ENCODE measurements at regions of chr2 and their contacts with region 1.

Region 1: DNA sequence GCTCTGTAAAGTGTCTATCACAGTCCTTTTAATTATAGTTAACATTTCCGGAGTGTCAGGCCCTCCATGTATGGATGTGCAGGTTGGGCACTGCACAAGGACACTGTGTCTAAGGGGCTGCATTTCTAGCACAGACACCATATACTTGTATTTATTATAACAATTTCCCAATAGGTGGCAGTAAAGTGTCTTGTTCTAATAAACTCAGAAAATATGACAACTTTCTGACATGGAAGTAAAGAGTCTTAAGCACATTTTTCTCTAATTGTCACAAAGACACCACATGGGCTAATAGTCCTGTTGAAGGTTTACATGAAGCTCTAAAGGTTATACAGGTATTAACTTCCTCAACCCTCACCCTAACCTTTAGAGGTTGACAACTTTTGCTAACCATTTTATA is 156.6 kb downstream of the DYSF start:
- DNase-seq: no peak
- ATAC-seq: peak in 2 of 8 donors; percentile 27 to 36
- H3K4me3 ChIP-seq: no peak overlapping the region
- H3K27ac ChIP-seq: peak overlapping the region in 1 of 10 donors; percentile 0
- H3K4me1 ChIP-seq: peaks cover 14 to 46% (median 32%) of the 10 kb centered on the region in 9 donors
- H3K27me3 ChIP-seq: no peaks in the 10 kb centered on the region
- CTCF ChIP-seq: peak in 7 of 9 donors; percentile 30 to 59 (median 48)

Region 2: DNA sequence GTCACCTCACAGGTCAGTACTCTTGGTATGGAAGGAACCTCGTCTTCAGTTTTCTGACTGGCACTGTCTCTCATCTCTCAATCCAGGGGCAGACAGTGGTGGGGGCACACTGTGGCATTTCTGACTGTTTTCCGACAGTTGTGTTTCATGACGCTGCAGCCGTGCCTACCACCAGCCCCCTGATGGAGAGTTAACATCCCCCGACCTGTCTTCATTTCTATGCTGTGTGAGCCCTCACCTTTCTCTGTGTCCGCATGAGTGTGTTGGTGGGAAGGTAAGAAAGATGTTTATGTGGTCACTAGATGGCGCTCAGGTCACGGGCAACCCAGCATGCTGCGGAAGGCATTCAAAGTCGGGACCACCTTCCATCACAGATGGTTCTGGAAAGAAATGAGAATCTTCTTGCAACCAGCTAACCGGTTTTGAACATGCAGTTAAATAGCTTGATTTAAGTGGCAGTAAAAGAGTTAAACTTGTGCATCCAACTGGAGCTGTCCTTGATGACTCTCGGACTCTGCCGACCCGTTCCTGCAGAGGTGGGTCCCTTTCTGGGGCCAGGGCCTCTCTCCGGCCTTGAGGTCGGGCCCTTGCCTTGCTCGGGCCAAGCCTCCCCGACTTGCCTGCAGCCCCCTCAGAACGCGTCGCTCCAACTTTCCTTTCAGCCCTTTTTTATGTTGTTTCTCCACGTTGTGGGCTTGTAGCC is 64.2 kb before region 1 on chr2:
- intact Hi-C with region 1: loop called in 3 of 10 experiments (anchors 5 kb)
- DNase-seq: peak in 1 of 2 donors; percentile 55
- ATAC-seq: peak; percentile 59 to 83 (median 78)
- H3K4me3 ChIP-seq: peak overlapping the region in 6 of 10 donors; percentile 15 to 30 (median 24)
- H3K27ac ChIP-seq: peak overlapping the region in 9 of 10 donors; percentile 34 to 79 (median 71)
- H3K4me1 ChIP-seq: peaks cover 0 to 17% (median 13%) of the 10 kb centered on the region in 9 donors
- H3K27me3 ChIP-seq: no peaks in the 10 kb centered on the region
- CTCF ChIP-seq: peak; percentile 66 to 83 (median 75)

Region 3: DNA sequence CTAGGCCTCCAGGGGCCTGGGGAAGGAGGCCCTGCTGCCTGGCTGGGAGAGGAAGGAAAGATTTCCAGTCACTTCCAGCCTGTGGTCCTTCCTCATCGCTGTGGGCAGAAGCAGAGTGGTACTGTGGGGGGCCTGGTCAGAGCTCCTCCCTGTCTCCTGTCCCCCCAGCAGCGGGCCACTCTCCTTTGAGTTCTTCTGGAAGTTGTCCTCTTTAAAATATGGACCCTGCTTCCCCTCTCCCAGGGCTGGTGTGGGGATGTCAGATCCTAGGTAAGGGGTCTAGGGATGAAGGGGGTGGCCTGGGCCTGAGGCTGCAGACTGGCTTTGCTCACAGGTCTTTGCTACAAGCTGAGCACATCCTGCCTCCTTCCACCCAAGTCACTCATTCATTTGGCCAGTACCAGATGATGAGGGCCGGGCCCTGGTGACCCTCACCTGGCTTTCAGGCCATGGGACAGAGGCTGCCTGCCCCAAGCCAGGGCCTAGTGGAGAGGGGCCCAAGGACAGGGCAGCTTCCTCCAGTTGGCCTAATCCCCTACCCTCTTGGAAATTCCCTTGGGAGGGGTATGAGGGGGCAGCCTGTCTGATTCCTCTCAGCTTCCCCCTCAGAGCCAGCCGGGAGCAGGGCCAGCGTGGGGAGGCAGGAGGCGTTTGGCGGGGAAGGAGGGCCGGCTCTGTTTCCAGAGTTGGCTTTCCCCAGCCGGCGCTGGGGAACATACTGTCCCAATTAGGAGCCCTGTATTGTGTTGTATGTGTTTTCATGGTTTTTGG is 75.3 kb after region 1 on chr2:
- intact Hi-C with region 1: loop called in 1 of 10 experiments (anchors 10 kb)
- DNase-seq: no peak
- ATAC-seq: peak; percentile 34 to 90 (median 50)
- H3K4me3 ChIP-seq: no peak overlapping the region
- H3K27ac ChIP-seq: peak overlapping the region in 7 of 10 donors; percentile 4 to 62 (median 30)
- H3K4me1 ChIP-seq: peaks cover 0 to 37% (median 10%) of the 10 kb centered on the region in 9 donors
- H3K27me3 ChIP-seq: no peaks in the 10 kb centered on the region
- CTCF ChIP-seq: no peak

Region 4: GRCh38 chr2:71861186-71862160 is 251.5 kb after region 1 on chr2:
- intact Hi-C with region 1: loop called in 1 of 10 experiments (anchors 10 kb)
- DNase-seq: no peak
- ATAC-seq: no peak
- H3K4me3 ChIP-seq: no peak overlapping the region
- H3K27ac ChIP-seq: no peak overlapping the region
- H3K4me1 ChIP-seq: no peaks in the 10 kb centered on the region
- H3K27me3 ChIP-seq: peaks cover 0 to under 1% (median 0%) of the 10 kb centered on the region in 7 donors
- CTCF ChIP-seq: no peak

Region 5: GRCh38 chr2:71995067-71995665 is 385.2 kb after region 1 on chr2:
- intact Hi-C with region 1: loop called in 1 of 10 experiments (anchors 10 kb)
- DNase-seq: no peak
- ATAC-seq: no peak
- H3K4me3 ChIP-seq: no peak overlapping the region
- H3K27ac ChIP-seq: no peak overlapping the region
- H3K4me1 ChIP-seq: no peaks in the 10 kb centered on the region
- H3K27me3 ChIP-seq: peaks cover 0 to 22% (median 6%) of the 10 kb centered on the region in 7 donors
- CTCF ChIP-seq: peak in 8 of 9 donors; percentile 12 to 52 (median 44)

Region 6: DNA sequence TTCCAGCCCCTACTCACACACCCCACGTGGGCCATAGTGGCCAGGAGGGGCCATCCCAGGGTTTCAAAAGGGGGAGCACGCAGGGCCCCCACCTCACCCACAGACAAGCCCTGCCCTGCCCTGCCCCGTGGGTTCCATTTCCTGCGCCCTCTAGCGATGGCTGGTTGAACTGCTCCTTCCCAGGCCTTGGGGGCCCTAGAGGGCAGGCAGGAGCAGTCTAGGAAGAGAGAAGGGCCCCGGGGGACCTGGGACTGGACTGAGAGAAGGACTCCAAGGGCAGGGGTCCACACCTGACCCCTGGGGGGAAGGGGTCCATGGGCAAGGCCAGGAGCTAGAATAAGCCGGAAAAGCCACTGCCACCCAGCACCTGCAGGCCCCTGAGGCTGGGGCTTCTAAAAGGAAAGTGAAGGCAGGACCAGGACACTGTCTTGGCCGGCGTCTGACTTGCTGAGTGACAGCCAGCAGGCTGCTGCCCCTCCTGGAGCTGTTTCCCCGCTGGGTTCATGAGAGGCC is 527.6 kb after region 1 on chr2:
- intact Hi-C with region 1: loop called in 2 of 10 experiments (anchors 5 to 10 kb)
- DNase-seq: peak; percentile 55 to 75
- ATAC-seq: peak; percentile 45 to 82 (median 74)
- H3K4me3 ChIP-seq: peak overlapping the region in 2 of 10 donors; percentile 11 to 15
- H3K27ac ChIP-seq: no peak overlapping the region
- H3K4me1 ChIP-seq: peaks cover 14 to 29% (median 19%) of the 10 kb centered on the region in 9 donors
- H3K27me3 ChIP-seq: peaks cover 0 to 4% (median 0%) of the 10 kb centered on the region in 7 donors
- CTCF ChIP-seq: peak; percentile 68 to 96 (median 90)